ENCODE measurements at regions of chr6 and their contacts with region 1.

Region 1: DNA sequence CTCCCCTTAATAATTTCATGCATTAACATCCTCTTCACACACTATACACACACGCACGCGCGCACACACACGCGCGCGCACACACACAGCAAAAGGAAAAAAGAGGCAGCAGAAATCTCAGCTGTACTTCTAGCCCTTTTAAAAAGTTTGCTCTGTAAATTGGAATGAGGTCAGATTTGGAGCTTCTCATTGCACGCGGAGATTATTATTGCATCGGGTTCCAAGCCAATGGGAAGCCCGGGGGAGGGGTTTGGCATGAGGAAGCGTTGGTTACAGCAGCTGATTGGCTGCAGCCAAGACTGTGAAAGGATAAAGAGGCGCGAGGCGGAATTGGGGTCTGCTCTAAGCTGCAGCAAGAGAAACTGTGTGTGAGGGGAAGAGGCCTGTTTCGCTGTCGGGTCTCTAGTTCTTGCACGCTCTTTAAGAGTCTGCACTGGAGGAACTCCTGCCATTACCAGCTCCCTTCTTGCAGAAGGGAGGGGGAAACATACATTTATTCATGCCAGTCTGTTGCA is at the start of gene SOX4:
- DNase-seq: peak; percentile 94
- ATAC-seq: peak; percentile 82
- total RNA-seq, gene SOX4: 6.2 TPM

Region 2: DNA sequence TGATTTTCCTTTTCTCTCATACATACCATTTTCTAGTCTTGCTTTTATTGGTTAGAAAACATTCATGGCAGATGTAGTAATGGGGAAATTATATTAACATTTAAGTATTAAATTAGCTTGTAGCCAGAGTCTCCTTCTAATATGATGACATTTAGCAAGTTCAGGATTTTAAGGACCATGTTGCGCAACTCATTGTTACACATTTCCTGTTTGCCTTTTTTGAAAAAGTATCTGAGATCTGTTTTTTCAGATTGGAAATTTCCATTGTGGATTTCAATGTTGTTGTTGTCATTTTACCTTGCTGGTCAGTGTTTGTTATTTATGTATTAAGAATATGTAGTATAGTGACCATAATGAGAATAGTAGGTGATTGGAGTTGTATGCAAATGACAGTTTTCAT is 1020.5 kb before region 1 on chr6:
- intact Hi-C with region 1: loop called (anchors 5 kb)
- DNase-seq: no peak
- ATAC-seq: no peak

Region 3: GRCh38 chr6:20789162-20789561 is 804.3 kb before region 1 on chr6:
- intact Hi-C with region 1: loop called (anchors 5 kb)
- DNase-seq: no peak
- ATAC-seq: peak; percentile 69

Region 4: GRCh38 chr6:20877008-20877937 is 716.2 kb before region 1 on chr6:
- intact Hi-C with region 1: loop called (anchors 10 kb)
- DNase-seq: no peak
- ATAC-seq: peak; percentile 48

Region 5: DNA sequence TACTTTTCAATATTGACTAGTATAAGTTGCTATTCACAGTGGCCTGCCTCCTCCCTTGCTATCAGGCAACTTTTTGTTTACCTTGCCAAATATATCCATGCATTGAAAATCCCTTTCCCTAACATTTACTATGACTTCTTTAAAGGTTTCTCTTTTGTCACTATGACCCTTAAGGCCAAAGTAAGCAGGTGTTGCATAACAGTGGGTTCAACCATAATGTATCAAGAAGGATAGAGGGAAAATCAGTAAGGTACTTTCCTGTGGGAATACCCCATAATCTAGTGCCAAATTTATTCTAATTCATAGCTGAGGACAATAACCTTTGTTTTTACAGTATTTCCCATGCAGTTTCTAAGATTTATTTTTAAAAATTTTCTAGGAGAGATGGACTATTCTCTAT is 531.6 kb before region 1 on chr6:
- intact Hi-C with region 1: no loop called
- DNase-seq: no peak
- ATAC-seq: no peak

Region 6: GRCh38 chr6:21935561-21936028 is 342.1 kb after region 1 on chr6:
- intact Hi-C with region 1: loop called (anchors 10 kb)
- DNase-seq: no peak
- ATAC-seq: no peak

Region 7: DNA sequence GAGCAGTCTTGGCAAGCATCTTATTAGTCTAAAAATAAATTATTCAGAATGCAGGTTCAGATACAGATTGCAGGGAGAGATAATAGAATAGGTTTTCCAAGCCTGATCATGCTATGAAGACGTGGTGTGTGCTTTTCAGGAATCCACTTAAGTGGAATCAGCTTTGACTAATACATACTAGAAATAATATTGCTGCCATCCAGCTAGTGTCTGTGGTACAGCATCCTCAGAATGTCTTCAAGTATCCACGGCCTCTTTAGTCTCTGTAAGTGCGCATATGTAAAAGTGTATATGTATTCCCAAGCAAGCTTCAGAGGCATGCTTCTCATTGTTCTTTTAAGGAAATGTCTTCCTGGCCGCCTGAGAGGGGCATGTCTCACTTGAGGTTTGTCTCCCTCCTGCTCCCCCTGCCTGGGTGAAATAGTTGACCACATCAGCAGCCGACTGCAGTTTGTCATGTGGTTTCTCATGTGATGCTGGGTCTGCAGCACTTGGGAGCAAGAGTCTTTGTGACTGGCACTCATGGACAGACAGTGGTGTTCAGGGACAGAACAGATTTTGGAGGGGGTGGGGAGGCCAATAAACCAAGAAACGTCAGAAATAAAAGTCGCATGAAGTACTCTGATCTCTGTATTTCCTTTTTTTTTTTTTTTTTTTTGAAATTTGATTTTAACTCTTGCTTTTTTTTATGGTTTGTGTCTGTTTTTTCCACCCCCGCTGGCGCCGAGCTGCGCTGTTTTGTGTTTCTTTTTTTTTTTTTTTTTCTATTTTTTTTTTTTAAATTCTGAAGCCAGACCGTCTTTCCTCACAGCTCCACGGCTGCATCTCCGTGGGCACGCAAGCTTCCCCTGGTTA is 552.6 kb after region 1 on chr6:
- intact Hi-C with region 1: loop called (anchors 10 kb)
- DNase-seq: no peak
- ATAC-seq: peak; percentile 18

Region 8: GRCh38 chr6:23446394-23447046 is 1853.1 kb after region 1 on chr6:
- intact Hi-C with region 1: loop called (anchors 10 kb)
- DNase-seq: no peak
- ATAC-seq: peak; percentile 91

Measured in Right ventricle myocardium superior (tissue), 1 donor.